Activated CD4-positive, alpha-beta memory T cell treated with anti-CD3 and anti-CD28 coated beads for 36 hours (primary cell): ENCODE measurements at regions of chr20 and their contacts with region 1.

Region 1: GRCh38 chr20:47677635-47678453 is 107.4 kb downstream of the SULF2 start:
- DNase-seq: peak; percentile 78
- H3K4me3 Mint-ChIP-seq: no peak overlapping the region
- H3K27ac Mint-ChIP-seq: no peak overlapping the region
- H3K4me1 Mint-ChIP-seq: no peaks in the 10 kb centered on the region
- H3K27me3 Mint-ChIP-seq: no peaks in the 10 kb centered on the region

Region 2: GRCh38 chr20:47713878-47714450 is 36.1 kb after region 1 on chr20:
- CTCF ChIA-PET with region 1: interaction called, 3 read pairs
- POLR2A ChIA-PET with region 1: no interaction called
- intact Hi-C with region 1: loop called (anchors 1 kb)
- DNase-seq: no peak
- H3K4me3 Mint-ChIP-seq: no peak overlapping the region
- H3K27ac Mint-ChIP-seq: no peak overlapping the region
- H3K4me1 Mint-ChIP-seq: no peaks in the 10 kb centered on the region
- H3K27me3 Mint-ChIP-seq: peaks cover 17% of the 10 kb centered on the region

Region 3: GRCh38 chr20:47725248-47725973 is 47.6 kb after region 1 on chr20:
- CTCF ChIA-PET with region 1: interaction called, 5 read pairs
- POLR2A ChIA-PET with region 1: no interaction called
- intact Hi-C with region 1: loop called (anchors 5 kb)
- DNase-seq: peak; percentile 90
- H3K4me3 Mint-ChIP-seq: no peak overlapping the region
- H3K27ac Mint-ChIP-seq: no peak overlapping the region
- H3K4me1 Mint-ChIP-seq: peaks cover 22% of the 10 kb centered on the region
- H3K27me3 Mint-ChIP-seq: no peaks in the 10 kb centered on the region